ENCODE measurements at regions of chr5 and their contacts with region 1.

Region 1: GRCh38 chr5:62403434-62404250 is at the start of gene DIMT1:
- DNase-seq: peak; percentile 98
- H3K4me3 Mint-ChIP-seq: peak within 1 kb of the TSS; percentile 99
- H3K27ac Mint-ChIP-seq: peak within 1 kb of the TSS; percentile 94
- H3K4me1 Mint-ChIP-seq: peaks cover 22% of the 10 kb centered on the region
- H3K27me3 Mint-ChIP-seq: no peaks in the 10 kb centered on the region
- CTCF ChIP-seq: no peak
- total RNA-seq, gene DIMT1: 39.0 and 44.0 TPM in 2 replicates

Region 2: GRCh38 chr5:61805101-61805500 is 598.5 kb before region 1 on chr5:
- CTCF ChIA-PET with region 1: no interaction called
- POLR2A ChIA-PET with region 1: no interaction called
- intact Hi-C with region 1: no loop called
- DNase-seq: peak; percentile 80
- H3K4me3 Mint-ChIP-seq: no peak overlapping the region
- H3K27ac Mint-ChIP-seq: peak overlapping the region; percentile 90
- H3K4me1 Mint-ChIP-seq: peaks cover 16% of the 10 kb centered on the region
- H3K27me3 Mint-ChIP-seq: no peaks in the 10 kb centered on the region
- CTCF ChIP-seq: no peak

Region 3: GRCh38 chr5:62385131-62385530 is 18.5 kb before region 1 on chr5:
- CTCF ChIA-PET with region 1: interaction called, 3 read pairs
- POLR2A ChIA-PET with region 1: interaction called, 37 read pairs
- intact Hi-C with region 1: no loop called
- DNase-seq: no peak
- H3K4me3 Mint-ChIP-seq: no peak overlapping the region
- H3K27ac Mint-ChIP-seq: no peak overlapping the region
- H3K4me1 Mint-ChIP-seq: peaks cover 9% of the 10 kb centered on the region
- H3K27me3 Mint-ChIP-seq: no peaks in the 10 kb centered on the region
- CTCF ChIP-seq: no peak

Region 4: GRCh38 chr5:62560786-62561185 is 157.1 kb after region 1 on chr5:
- CTCF ChIA-PET with region 1: no interaction called
- POLR2A ChIA-PET with region 1: no interaction called
- intact Hi-C with region 1: no loop called
- DNase-seq: no peak
- H3K4me3 Mint-ChIP-seq: no peak overlapping the region
- H3K27ac Mint-ChIP-seq: no peak overlapping the region
- H3K4me1 Mint-ChIP-seq: no peaks in the 10 kb centered on the region
- H3K27me3 Mint-ChIP-seq: no peaks in the 10 kb centered on the region
- CTCF ChIP-seq: no peak